ENCODE measurements at regions of chr7 and their contacts with region 1.

Region 1: DNA sequence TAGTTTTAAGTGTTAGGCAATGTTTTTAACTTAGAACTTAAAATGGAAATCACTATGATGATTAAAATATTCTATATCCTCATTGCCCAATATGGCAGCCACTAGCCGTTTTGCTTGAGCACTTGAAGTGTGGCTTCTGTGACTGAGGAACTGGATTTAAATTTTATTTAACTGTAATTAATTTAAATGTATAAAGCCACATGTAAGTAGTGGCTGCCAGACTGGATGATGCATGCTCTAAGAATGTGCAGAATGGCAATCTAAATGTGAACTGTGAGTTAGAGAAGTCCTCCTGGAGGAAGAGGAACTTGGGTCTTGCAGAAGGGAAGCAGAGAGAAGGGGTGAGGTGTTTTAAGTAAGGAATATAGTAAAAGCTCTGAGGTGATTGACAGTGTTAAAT is 451.4 kb downstream of the SUGCT start:
- DNase-seq: no peak
- ATAC-seq: no peak
- H3K4me3 ChIP-seq: no peak overlapping the region
- H3K4me3 Mint-ChIP-seq: no peak overlapping the region
- H3K27ac ChIP-seq: no peak overlapping the region
- H3K27ac Mint-ChIP-seq: no peak overlapping the region
- H3K4me1 ChIP-seq: no peaks in the 10 kb centered on the region
- H3K4me1 Mint-ChIP-seq: no peaks in the 10 kb centered on the region
- H3K27me3 ChIP-seq: no peaks in the 10 kb centered on the region
- H3K27me3 Mint-ChIP-seq: no peaks in the 10 kb centered on the region

Region 2: GRCh38 chr7:40621592-40621998 is 35.4 kb after region 1 on chr7:
- CTCF ChIA-PET with region 1: no interaction called
- POLR2A ChIA-PET with region 1: interaction called in 1 of 2 experiments, 10 read pairs
- DNase-seq: no peak
- ATAC-seq: no peak
- H3K4me3 ChIP-seq: no peak overlapping the region
- H3K4me3 Mint-ChIP-seq: no peak overlapping the region
- H3K27ac ChIP-seq: no peak overlapping the region
- H3K27ac Mint-ChIP-seq: no peak overlapping the region
- H3K4me1 ChIP-seq: no peaks in the 10 kb centered on the region
- H3K4me1 Mint-ChIP-seq: no peaks in the 10 kb centered on the region
- H3K27me3 ChIP-seq: no peaks in the 10 kb centered on the region
- H3K27me3 Mint-ChIP-seq: no peaks in the 10 kb centered on the region

Region 3: DNA sequence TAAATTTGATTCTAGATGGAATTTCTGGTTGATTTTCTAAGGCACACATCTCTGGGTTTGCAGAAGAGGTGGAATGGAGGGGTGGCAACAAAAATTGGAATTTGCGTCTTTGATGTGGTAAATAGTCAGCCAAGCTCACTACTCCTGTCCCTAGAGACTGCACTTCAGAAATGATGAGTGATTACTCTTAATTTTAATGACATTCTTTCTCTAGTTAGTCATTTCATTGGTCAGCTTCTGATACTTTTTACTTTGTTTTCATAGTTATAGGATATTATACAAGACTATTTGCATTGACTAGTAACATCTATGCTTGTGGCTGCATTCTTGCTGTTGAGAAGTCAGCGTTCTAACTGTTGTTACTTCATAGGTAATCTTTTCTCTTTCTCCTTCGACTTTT is 206.9 kb after region 1 on chr7:
- CTCF ChIA-PET with region 1: no interaction called
- POLR2A ChIA-PET with region 1: no interaction called
- DNase-seq: no peak
- ATAC-seq: no peak
- H3K4me3 ChIP-seq: no peak overlapping the region
- H3K4me3 Mint-ChIP-seq: no peak overlapping the region
- H3K27ac ChIP-seq: no peak overlapping the region
- H3K27ac Mint-ChIP-seq: no peak overlapping the region
- H3K4me1 ChIP-seq: no peaks in the 10 kb centered on the region
- H3K4me1 Mint-ChIP-seq: no peaks in the 10 kb centered on the region
- H3K27me3 ChIP-seq: no peaks in the 10 kb centered on the region
- H3K27me3 Mint-ChIP-seq: no peaks in the 10 kb centered on the region